Cardiac septum (tissue), 1 donor: ENCODE measurements at regions of chr7 and their contacts with region 1.

Region 1: GRCh38 chr7:23712368-23713284 is 2.6 kb downstream of the STK31 start:
- DNase-seq: no peak

Region 2: GRCh38 chr7:23135755-23136154 is 576.9 kb before region 1 on chr7:
- intact Hi-C with region 1: no loop called
- DNase-seq: no peak

Region 3: GRCh38 chr7:23546897-23547572 is 165.6 kb before region 1 on chr7:
- intact Hi-C with region 1: loop called (anchors 10 kb)
- DNase-seq: no peak

Region 4: DNA sequence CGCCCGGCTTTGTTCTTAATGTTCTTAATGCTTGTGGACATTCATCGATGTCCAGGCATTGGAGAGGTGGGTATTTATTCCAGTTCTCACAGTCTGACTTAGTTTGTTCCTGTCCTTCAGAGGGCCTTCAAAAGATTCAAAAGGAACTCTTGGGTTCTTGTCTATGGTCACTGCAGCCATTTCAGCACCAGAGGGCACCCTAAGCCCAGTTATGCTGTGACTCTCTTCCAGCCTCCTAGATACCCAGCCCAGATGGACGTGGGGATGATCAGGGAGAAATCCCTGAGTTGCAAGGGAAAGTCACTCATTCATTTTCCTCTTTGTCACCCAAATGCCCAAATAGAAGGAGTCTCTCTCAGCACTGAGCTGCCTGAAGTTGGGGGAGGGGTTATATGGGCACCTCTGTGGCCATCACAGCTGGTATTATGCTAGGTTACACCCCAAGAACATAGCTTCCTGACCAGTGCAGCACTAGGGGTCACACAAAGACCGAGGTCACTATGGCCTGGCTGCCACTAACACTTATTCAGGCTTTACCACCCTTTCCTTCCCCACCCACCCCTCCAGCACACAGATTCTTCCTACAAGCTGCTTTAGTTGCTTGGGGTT is 141.9 kb before region 1 on chr7:
- intact Hi-C with region 1: loop called (anchors 1 kb)
- DNase-seq: peak; percentile 83

Region 5: DNA sequence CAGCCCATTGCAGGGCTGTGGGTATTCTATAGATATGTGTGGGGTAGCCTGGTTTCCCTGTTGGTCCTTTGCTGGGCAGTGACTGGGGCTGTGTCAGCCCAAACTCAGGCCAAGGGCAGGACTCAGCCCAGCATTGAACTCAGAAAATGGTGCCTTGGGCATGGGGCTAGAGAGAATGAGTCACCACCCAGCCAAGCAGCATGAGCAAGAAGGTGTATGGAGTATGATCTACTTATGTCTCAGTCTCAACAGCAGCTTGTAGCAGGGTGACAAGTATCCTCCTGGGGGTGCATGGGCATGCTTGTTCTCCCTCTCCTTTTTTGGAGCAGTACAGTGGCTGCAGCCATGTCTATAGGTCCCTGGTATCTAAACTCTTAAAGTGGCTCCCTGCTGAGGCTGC is 29.4 kb after region 1 on chr7:
- intact Hi-C with region 1: no loop called
- DNase-seq: no peak

Region 6: DNA sequence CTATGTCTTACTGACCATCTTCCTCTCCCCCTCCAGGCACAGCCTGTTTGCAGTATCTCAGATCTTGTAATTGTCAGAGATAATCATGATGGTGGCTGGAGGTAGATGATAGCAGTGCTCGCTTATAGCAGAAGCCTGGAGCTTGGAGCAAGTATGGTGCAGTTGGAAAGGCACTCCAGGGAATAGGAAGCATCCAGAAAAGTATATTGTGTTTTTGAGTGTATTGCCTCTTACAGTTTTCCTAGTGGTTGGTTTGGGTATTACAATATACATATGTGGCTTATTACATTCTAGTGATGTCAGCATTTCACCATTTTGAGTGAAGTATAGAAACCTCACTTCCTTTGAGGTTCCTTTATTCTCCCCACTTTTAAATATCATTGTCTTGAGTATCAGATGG is 98.9 kb after region 1 on chr7:
- intact Hi-C with region 1: no loop called
- DNase-seq: no peak